ENCODE measurements at regions of chr1 and their contacts with region 1.

Region 1: GRCh38 chr1:6646499-6647148 is 22.0 kb downstream of the THAP3 start:
- DNase-seq: peak; percentile 50 to 51
- H3K4me3 ChIP-seq: no peak overlapping the region
- H3K27ac ChIP-seq: no peak overlapping the region
- H3K4me1 ChIP-seq: no peaks in the 10 kb centered on the region
- H3K27me3 ChIP-seq: no peaks in the 10 kb centered on the region
- CTCF ChIP-seq: peak; percentile 35 to 82 (median 70)
- POLR2A ChIP-seq: no peak

Region 2: GRCh38 chr1:6489799-6490180 is 156.8 kb before region 1 on chr1:
- intact Hi-C with region 1: loop called (anchors 5 kb)
- DNase-seq: peak; percentile 59 to 65
- H3K4me3 ChIP-seq: peak overlapping the region; percentile 25 to 50 (median 40)
- H3K27ac ChIP-seq: no peak overlapping the region
- H3K4me1 ChIP-seq: peaks cover 10 to 46% of the 10 kb centered on the region in 2 donors
- H3K27me3 ChIP-seq: peaks cover 3% of the 10 kb centered on the region
- CTCF ChIP-seq: peak; percentile 57 to 97 (median 80)
- POLR2A ChIP-seq: no peak

Region 3: DNA sequence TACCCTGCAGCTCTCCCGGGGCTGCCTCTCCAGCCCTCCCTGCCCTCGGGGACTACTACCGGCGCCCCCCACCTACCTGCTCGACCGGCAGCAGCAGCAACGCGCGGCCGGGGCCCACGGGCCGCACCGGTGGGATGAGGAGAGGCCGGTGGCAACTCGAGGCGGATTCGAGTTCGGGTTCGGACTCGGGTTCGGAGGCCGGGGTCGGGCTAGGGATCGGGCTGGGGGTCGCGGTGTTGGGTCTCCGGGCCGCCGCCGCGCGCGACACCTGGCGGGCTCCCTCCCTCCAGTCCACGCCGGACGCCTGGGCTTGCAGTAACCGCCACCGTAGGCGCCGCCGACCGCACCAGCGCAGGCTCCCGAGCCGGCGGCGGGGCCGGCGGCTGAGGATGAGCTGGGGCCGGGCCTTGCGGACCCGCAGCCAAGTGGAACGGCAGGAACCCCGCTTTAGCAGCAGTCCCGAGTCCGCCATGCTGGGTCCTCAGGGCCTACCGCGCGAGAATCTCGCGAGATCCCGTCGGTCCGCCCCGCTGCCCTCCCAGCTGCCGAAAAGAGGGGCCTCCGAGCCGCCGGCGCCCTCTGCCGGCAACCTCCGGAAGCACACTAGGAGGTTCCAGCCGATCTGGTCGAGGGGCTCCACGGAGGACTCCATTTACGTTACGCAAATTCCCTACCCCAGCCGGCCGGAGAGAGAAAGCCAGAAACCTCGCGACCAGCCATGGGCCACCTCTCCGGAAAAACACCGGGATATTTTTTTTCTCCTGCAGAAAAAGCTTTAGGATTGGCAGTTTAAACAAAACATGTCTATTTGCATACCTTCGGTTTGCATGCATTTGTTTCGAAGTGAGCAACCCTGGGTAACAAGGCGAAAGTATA is 92.4 kb before region 1 on chr1 and contains the start of gene NOL9:
- intact Hi-C with region 1: loop called (anchors 2 kb)
- DNase-seq: peak; percentile 93
- H3K4me3 ChIP-seq: peak within 1 kb of the TSS; percentile 97 to 99 (median 98)
- H3K27ac ChIP-seq: peak within 1 kb of the TSS; percentile 29 to 76 (median 69)
- H3K4me1 ChIP-seq: peaks cover 14 to 16% of the 10 kb centered on the region in 2 donors
- H3K27me3 ChIP-seq: no peaks in the 10 kb centered on the region
- CTCF ChIP-seq: peak; percentile 91 to 98 (median 96)
- POLR2A ChIP-seq: peak in 1 of 2 donors; percentile 64
- total RNA-seq, gene NOL9: 20.1 to 41.6 (median 23.6) TPM

Region 4: DNA sequence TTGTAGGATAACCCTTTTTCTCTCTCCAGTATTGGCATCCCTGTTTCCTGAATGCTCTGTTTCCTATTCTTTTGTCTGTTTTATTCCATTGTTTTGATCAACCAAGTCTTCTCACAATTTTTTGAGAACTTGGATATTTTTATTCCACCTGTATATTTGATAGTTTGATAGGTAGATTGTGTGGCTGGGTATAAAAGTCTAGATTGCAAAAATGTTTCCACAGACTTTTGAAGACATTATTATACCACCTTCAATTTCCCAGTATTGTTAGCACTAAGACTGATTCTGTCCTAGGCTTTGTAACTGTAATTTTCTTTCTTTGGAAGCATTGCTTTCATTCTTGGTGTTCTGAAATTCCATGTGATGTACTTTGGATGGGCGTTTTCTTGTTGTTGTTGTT is 64.5 kb after region 1 on chr1:
- intact Hi-C with region 1: no loop called
- DNase-seq: no peak
- H3K4me3 ChIP-seq: no peak overlapping the region
- H3K27ac ChIP-seq: no peak overlapping the region
- H3K4me1 ChIP-seq: no peaks in the 10 kb centered on the region
- H3K27me3 ChIP-seq: no peaks in the 10 kb centered on the region
- CTCF ChIP-seq: no peak
- POLR2A ChIP-seq: no peak

Region 5: GRCh38 chr1:6833804-6834203 is 187.2 kb after region 1 on chr1:
- intact Hi-C with region 1: no loop called
- DNase-seq: no peak
- H3K4me3 ChIP-seq: no peak overlapping the region
- H3K27ac ChIP-seq: no peak overlapping the region
- H3K4me1 ChIP-seq: peaks cover 16 to 29% of the 10 kb centered on the region in 2 donors
- H3K27me3 ChIP-seq: no peaks in the 10 kb centered on the region
- CTCF ChIP-seq: no peak
- POLR2A ChIP-seq: no peak